Posterior vena cava (tissue), 2 donors: ENCODE measurements at regions of chr19 and their contacts with region 1.

Region 1: GRCh38 chr19:30920222-30920621 is 429.0 kb downstream of the TSHZ3 start:
- DNase-seq: no peak

Region 2: GRCh38 chr19:30733826-30734550 is 186.2 kb before region 1 on chr19:
- intact Hi-C with region 1: no loop called
- DNase-seq: no peak

Region 3: DNA sequence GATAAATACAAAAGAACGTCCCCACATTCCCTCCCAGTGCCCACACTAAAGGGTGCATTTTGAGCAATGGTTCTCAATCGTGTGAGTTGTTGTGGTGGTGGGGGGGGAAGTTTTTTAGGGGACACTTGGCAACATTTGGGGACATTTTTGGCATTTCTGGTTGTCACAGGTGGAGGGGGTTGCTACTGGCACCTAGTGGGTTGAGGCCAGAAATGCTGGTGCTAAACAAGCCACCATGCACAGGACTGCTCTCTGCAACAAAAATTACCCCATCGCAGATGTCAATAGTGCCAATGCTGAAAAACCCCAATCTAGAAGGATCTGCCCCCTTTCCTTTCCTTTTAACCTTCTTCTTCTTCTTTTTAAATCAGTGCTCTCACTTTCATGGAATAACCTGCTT is 24.3 kb before region 1 on chr19:
- intact Hi-C with region 1: loop called in 1 of 2 experiments (anchors 1 kb)
- DNase-seq: no peak